Cardiac septum (tissue), 1 donor: ENCODE measurements at regions of chr11 and their contacts with region 1.

Region 1: DNA sequence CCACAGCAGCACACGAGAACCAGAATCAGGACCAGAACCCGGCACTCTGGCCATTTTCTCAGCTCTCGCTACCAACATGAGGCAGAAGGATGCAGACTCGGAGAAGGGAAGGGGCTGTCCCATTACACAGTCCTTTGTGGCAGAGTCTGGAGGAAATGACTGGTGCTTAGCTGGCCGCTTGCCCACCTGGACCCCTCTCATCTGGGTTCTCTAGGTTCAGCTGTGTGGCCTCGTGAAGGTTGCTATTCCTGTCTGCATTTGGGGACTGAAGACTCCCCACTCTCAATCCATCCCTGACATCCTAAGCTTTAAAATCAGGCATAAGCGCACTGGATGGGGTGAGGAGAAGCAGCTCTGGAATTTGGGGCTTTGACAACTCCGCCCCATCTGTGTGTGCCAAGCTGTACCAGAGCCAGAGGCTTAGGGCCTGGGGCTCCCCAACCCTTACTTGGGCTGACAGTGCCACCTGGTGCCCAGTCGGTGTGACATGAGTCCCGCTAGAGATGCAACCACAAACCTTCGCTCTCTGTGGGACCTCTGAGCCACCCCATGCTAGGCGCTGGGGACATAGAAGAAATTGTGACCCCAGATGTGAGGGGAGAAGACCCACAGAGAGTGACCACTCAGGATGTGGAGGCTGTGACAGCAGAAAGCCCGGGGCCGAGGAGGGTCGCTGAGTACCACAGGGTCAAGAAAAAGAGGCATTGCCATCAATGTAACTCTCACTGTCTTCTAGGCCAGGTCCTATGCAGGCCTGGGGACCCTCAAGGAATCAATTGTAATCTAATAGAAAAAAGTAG is 35.9 kb upstream of the FCHSD2 start:
- DNase-seq: peak; percentile 92

Region 2: GRCh38 chr11:72722050-72722748 is 455.8 kb before region 1 on chr11:
- intact Hi-C with region 1: loop called (anchors 5 kb)
- DNase-seq: peak; percentile 95

Region 3: DNA sequence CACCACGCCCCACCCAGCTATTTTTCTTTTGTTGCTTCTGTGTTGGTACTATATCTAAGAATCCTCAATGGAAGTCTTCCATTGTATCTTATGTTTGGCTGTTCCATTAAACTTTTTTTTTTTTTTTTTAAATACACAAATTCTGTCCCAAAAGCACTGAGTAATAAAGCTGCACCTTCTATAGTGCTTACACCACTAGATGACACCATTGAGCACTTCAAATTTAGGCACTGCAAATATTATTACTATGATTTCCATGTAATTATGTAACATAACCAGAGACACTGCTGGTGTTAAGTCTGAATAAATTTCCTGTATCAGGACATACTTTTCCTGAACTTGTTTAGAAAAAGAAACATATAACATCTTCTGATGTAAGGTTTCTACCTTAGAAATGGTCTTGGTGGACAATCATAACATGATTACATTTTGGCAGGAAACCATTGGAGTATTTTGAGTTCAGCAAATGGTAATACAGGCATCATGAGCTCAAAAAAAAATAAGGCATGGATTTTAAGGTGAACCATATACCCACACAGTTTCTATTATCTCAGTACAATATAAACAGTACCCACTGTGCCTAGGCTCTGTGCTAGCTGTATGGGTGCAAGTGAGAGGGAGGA is 253.3 kb before region 1 on chr11:
- intact Hi-C with region 1: loop called (anchors 2 kb)
- DNase-seq: no peak

Region 4: DNA sequence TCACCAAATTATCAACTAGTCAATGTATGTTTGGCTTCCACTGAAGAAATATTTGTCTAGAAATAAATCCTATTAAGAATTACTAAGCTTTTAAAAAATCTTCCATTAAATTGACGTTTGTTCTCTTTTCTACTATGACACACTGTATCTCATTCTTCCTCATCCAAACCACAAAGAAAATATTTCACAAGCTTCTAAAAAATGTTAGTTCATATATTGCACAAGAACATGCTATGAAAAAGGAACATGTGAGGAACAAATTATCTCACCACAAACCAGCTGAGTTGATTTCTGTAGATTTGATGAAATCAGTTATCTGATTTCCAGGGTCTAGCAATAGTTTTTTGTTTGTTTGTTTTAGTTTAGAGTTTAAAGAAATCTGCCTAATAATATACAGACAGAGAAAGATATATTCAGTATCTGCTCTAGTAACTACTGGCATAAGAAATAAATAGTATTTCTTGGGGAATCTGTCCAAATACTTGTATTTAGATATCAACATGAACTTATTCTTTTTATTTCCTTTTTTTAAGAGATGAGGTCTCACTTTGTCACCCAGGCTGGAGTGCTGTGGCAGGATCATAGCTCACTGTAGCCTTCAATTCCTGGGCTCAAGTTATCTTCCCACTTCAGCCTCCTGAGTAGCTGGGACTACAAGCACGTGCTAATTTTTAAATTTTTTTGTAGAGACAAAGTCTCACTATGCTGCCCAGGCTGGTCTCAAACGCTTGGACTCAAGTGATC is 202.0 kb before region 1 on chr11:
- intact Hi-C with region 1: no loop called
- DNase-seq: no peak

Region 5: GRCh38 chr11:73141848-73142286 is 36.1 kb before region 1 on chr11:
- intact Hi-C with region 1: loop called (anchors 1 kb)
- DNase-seq: peak; percentile 88

Region 6: DNA sequence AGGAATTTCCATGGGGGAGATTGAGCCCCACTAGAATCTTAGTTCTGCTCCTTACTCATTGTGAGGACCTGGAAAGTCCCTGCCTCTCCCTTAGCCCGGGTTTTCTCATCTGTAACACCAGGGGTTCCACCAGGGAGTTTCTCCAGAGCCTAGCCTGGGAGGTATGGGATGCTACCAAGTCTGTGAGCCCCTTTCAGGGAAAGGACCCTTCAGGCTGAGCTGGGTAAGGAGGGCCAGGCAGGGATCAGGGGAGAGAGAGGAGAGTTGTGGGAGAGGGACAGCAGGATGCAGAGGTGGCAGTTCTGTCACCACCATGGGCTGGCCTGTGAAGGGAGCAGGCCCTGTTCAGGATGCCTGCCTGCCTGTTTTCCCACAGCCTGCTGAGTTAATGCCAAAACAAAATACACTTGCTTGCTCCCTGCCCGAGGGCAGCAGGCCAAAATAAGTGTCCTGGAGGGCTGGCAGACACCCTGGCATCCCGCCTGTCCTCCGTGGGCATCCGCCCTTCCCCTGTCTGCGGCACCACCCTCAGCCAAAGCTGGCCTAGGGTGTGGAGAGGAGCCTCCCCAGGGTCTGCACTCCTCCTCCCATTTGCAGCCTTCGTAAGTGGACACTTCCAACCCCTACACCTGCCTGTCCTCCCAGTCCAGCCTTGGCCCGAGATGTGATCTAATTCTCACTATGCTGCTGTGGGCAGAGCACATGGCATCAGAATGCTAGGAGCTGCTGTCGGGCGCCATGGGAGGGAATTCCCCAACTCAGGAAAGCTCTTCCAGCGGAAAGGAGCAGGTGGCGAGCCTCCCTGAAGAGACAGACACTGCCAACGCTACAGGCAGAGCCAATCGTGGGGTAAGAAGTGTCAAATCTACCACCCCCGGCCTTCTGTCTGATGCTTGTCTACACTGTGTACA is 30.0 kb before region 1 on chr11:
- intact Hi-C with region 1: loop called (anchors 2 kb)
- DNase-seq: peak; percentile 84